CD8-positive, alpha-beta T cell (primary cell): ENCODE measurements at regions of chr19 and their contacts with region 1.

Region 1: GRCh38 chr19:1863726-1864480 is 524 bp upstream of the KLF16 start:
- DNase-seq: peak; percentile 80 to 96 (median 94)
- ATAC-seq: peak; percentile 71
- H3K4me3 ChIP-seq: peak overlapping the region; percentile 84 to 96
- H3K4me3 Mint-ChIP-seq: peak overlapping the region; percentile 80
- H3K27ac ChIP-seq: peak overlapping the region; percentile 71 to 83
- H3K27ac Mint-ChIP-seq: peak overlapping the region; percentile 57
- H3K4me1 ChIP-seq: peaks cover 42% of the 10 kb centered on the region
- H3K4me1 Mint-ChIP-seq: peaks cover 34% of the 10 kb centered on the region
- H3K27me3 ChIP-seq: no peaks in the 10 kb centered on the region
- H3K27me3 Mint-ChIP-seq: no peaks in the 10 kb centered on the region
- CTCF ChIP-seq: no peak

Region 2: GRCh38 chr19:1269065-1269477 is 594.8 kb before region 1 on chr19 and contains the start of gene CIRBP:
- CTCF ChIA-PET with region 1: no interaction called
- POLR2A ChIA-PET with region 1: no interaction called
- intact Hi-C with region 1: loop called in 1 of 2 experiments (anchors 5 kb)
- DNase-seq: peak; percentile 99 to 100 (median 99)
- ATAC-seq: peak; percentile 80
- H3K4me3 ChIP-seq: peak within 1 kb of the TSS; percentile 65 to 84
- H3K4me3 Mint-ChIP-seq: peak within 1 kb of the TSS; percentile 85
- H3K27ac ChIP-seq: peak within 1 kb of the TSS; percentile 88 to 89
- H3K27ac Mint-ChIP-seq: peak within 1 kb of the TSS; percentile 95
- H3K4me1 ChIP-seq: peaks cover 73% of the 10 kb centered on the region
- H3K4me1 Mint-ChIP-seq: peaks cover 68% of the 10 kb centered on the region
- H3K27me3 ChIP-seq: no peaks in the 10 kb centered on the region
- H3K27me3 Mint-ChIP-seq: no peaks in the 10 kb centered on the region
- CTCF ChIP-seq: no peak
- total RNA-seq, gene CIRBP: 689 to 695 TPM

Region 3: DNA sequence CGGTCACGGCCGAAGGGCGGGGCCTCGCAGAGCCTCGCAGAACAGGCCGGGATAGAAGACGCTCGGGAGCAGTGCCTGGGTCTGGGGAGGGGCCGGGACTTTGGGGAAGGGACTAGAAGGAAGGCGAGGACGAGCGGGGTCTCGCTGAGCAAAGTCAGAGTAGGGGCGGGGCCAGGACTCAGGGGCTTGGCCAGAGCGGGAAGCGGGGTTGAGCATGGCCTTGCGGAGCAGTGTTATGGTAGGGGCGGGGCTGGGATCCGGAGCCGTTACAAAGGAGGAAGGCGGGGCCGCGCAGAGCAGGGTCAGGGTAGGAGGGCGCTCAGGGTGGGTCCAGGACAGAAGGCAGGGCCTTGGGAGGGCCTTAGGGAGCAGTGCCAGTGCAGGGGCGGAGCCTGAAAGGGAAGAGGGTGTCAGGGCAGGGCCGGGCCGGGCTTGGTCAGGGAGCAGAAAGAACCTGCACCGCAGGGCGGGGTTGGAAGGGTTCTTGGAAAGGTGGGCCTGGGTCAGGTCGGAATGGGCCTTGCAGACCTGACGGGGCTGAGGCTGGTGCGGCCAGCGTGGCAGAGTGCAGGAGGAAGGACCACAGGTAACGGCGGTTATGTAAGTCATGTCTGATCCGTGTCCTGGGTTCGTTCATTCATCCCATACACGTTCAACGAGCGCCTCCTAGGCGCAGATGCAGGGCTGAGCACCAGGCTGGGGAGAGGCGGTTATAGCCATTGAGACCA is 51.3 kb before region 1 on chr19:
- CTCF ChIA-PET with region 1: no interaction called
- POLR2A ChIA-PET with region 1: no interaction called
- intact Hi-C with region 1: loop called in 1 of 2 experiments (anchors 1 kb)
- DNase-seq: peak; percentile 62 to 91 (median 81)
- ATAC-seq: peak; percentile 76
- H3K4me3 ChIP-seq: peak overlapping the region; percentile 72 to 77
- H3K4me3 Mint-ChIP-seq: peak overlapping the region; percentile 91
- H3K27ac ChIP-seq: peak overlapping the region; percentile 34 to 45
- H3K27ac Mint-ChIP-seq: peak overlapping the region; percentile 87
- H3K4me1 ChIP-seq: peaks cover 12% of the 10 kb centered on the region
- H3K4me1 Mint-ChIP-seq: peaks cover 13% of the 10 kb centered on the region
- H3K27me3 ChIP-seq: no peaks in the 10 kb centered on the region
- H3K27me3 Mint-ChIP-seq: no peaks in the 10 kb centered on the region
- CTCF ChIP-seq: peak; percentile 65

Region 4: DNA sequence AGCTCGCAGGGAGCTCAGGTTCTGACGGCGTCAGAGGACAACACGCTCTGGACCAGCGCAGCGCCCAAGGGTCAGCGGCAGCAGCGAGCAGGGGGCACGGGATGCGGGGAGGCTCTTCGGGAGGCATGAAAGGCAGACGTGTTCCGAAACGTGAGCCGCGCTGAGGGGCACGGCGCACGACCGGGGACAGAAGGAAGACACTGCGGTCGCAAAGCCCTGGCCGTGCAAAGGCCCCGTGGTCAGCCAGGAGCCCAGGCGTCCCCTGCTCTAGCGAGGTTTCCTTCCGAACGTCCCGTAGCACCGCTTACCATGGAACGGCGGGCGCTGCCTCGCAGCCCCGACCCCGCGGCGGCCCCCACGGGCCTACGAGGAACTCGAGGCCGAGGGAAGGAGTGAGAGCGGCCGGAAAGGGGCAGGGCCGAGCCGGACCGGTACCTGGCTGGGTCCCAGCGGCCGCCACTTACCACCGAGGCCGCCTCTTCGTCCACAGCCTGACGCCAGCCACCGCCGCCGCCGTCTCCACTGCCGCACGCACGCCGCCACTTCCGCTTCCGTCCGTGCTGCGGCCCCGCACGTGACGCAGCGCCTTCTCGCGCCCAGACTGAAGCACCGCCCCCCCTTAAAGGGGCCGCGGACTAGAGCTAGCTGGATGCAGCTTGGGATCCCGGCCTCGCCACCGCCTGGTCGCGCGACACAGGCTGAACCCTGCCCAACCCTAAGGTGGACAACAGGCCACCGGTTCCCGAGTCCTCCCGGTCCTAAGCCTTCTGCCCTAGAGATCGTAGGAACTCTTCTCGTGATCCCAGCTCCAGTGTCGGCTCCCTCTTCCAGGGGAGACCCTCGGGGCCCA is 12.0 kb after region 1 on chr19:
- CTCF ChIA-PET with region 1: interaction called, 10 read pairs
- POLR2A ChIA-PET with region 1: interaction called, 13 read pairs
- intact Hi-C with region 1: loop called (anchors 1 kb)
- DNase-seq: peak; percentile 70 to 93 (median 87)
- ATAC-seq: peak; percentile 84
- H3K4me3 ChIP-seq: peak overlapping the region; percentile 82 to 98
- H3K4me3 Mint-ChIP-seq: peak overlapping the region; percentile 99
- H3K27ac ChIP-seq: peak overlapping the region; percentile 90 to 95
- H3K27ac Mint-ChIP-seq: peak overlapping the region; percentile 98
- H3K4me1 ChIP-seq: peaks cover 43% of the 10 kb centered on the region
- H3K4me1 Mint-ChIP-seq: peaks cover 31% of the 10 kb centered on the region
- H3K27me3 ChIP-seq: no peaks in the 10 kb centered on the region
- H3K27me3 Mint-ChIP-seq: no peaks in the 10 kb centered on the region
- CTCF ChIP-seq: no peak

Region 5: DNA sequence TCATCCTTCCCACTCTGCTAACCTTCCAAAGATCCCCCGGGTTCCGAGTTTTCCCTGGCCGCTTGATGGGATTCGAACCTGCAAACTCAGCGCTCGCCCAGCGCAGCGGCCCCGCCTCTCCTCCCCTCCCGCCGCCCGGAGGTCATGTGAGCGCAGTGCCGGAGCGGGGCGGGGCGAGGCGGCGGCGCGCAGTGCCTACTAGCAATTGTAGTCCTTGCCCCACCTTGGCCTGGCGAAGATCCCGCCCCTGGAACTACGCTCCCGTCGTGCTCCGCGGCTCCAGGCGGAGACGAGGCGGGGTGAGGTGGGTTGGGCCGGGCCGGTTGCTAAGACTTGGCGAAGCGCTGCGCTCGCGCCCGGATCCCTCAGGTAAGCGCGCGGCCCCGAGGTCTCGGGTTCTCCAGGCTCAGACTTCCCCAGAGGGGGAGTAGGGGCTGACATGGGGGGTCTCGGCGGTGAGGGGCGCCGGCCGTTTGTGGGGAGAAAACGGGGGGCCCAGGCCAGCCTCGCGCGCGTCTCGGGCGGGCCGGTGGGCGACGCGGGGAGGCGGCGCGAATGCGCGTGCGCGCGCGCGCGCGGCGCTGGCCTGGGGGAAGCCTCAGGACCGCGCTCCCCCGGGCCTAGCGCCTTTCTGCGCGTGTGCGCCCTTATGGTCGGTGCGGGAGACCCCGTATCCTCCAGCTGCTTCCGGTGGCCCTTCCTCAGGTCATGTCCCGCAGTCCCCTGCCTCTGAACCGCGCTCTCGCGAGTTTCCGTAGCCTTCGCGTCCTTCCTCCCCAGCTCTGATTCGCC is 41.4 kb after region 1 on chr19 and contains the starts of genes ADAT3 and SCAMP4:
- CTCF ChIA-PET with region 1: interaction called, 3 read pairs
- POLR2A ChIA-PET with region 1: interaction called, 5 read pairs
- intact Hi-C with region 1: loop called (anchors 1 kb)
- DNase-seq: peak; percentile 97 to 99 (median 98)
- ATAC-seq: peak; percentile 99
- H3K4me3 ChIP-seq: peak within 1 kb of the TSS; percentile 61 to 67
- H3K4me3 Mint-ChIP-seq: peak within 1 kb of the TSS; percentile 89
- H3K27ac ChIP-seq: peak within 1 kb of the TSS; percentile 54 to 81
- H3K27ac Mint-ChIP-seq: peak within 1 kb of the TSS; percentile 85
- H3K4me1 ChIP-seq: peaks cover 38% of the 10 kb centered on the region
- H3K4me1 Mint-ChIP-seq: peaks cover 34% of the 10 kb centered on the region
- H3K27me3 ChIP-seq: no peaks in the 10 kb centered on the region
- H3K27me3 Mint-ChIP-seq: no peaks in the 10 kb centered on the region
- CTCF ChIP-seq: no peak
- total RNA-seq, gene ADAT3: 6.4 to 7.3 TPM
- total RNA-seq, gene SCAMP4: 18.5 to 19.2 TPM

Region 6: GRCh38 chr19:1917146-1917545 is 53.2 kb after region 1 on chr19:
- CTCF ChIA-PET with region 1: no interaction called
- POLR2A ChIA-PET with region 1: no interaction called
- intact Hi-C with region 1: no loop called
- DNase-seq: no peak
- ATAC-seq: no peak
- H3K4me3 ChIP-seq: no peak overlapping the region
- H3K4me3 Mint-ChIP-seq: no peak overlapping the region
- H3K27ac ChIP-seq: no peak overlapping the region
- H3K27ac Mint-ChIP-seq: no peak overlapping the region
- H3K4me1 ChIP-seq: peaks cover 3% of the 10 kb centered on the region
- H3K4me1 Mint-ChIP-seq: no peaks in the 10 kb centered on the region
- H3K27me3 ChIP-seq: no peaks in the 10 kb centered on the region
- H3K27me3 Mint-ChIP-seq: no peaks in the 10 kb centered on the region
- CTCF ChIP-seq: no peak

Region 7: DNA sequence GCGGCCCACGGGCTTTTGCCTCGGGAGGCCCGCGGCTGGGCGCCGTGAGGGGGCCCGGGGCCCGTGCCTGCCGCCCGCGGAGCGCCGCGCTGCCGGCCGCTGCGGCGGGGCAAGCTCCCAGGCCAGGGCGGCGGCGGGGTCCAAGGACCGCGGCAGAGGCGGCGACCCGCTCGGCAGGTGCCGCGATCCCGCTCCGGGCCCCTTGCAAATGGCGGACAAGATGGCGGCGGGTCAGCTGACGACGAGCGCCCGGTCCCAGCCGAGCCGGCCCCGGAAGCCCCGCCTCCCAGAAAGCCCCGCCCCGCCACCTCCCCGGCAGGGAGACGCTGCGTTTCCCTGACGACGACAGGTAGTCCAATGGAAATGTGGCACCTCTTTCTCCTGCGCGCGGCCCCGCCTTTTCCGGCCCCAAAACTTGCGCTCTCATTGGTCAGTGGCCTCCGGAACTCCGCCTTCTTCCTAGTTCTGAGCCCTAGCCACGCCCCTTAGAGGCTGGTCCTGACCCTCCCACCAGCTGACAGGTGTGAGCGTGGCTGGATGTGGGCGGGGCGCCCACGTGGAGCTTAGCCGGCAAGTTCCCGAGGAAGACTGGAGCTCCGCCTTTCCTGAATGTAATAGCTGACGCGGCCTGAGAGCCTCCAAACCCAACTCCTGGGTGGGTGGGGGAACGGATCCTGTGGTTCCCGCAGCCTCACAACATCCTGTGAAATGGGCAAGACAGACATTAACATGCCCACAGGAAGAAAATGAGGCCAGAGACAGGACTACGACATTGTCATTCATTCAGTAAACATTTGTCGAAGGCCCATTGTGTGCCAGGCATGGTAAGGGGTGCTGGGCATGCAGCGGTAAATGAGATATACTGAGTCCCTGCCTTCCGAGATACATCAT is 287.7 kb after region 1 on chr19 and contains the start of gene AP3D1:
- CTCF ChIA-PET with region 1: no interaction called
- POLR2A ChIA-PET with region 1: no interaction called
- intact Hi-C with region 1: loop called (anchors 1 kb)
- DNase-seq: peak; percentile 100
- ATAC-seq: peak; percentile 91
- H3K4me3 ChIP-seq: peak within 1 kb of the TSS; percentile 60 to 87
- H3K4me3 Mint-ChIP-seq: peak within 1 kb of the TSS; percentile 85
- H3K27ac ChIP-seq: peak within 1 kb of the TSS; percentile 78 to 79
- H3K27ac Mint-ChIP-seq: peak within 1 kb of the TSS; percentile 90
- H3K4me1 ChIP-seq: peaks cover 36% of the 10 kb centered on the region
- H3K4me1 Mint-ChIP-seq: peaks cover 35% of the 10 kb centered on the region
- H3K27me3 ChIP-seq: no peaks in the 10 kb centered on the region
- H3K27me3 Mint-ChIP-seq: no peaks in the 10 kb centered on the region
- CTCF ChIP-seq: no peak
- total RNA-seq, gene AP3D1: 39.4 to 42.5 TPM

Region 8: GRCh38 chr19:3505598-3506383 is 1641.9 kb after region 1 on chr19 and contains the start of gene FZR1:
- CTCF ChIA-PET with region 1: no interaction called
- POLR2A ChIA-PET with region 1: no interaction called
- intact Hi-C with region 1: loop called in 1 of 2 experiments (anchors 5 kb)
- DNase-seq: peak; percentile 99 to 100 (median 100)
- ATAC-seq: peak; percentile 85
- H3K4me3 ChIP-seq: peak within 1 kb of the TSS; percentile 76 to 83
- H3K4me3 Mint-ChIP-seq: peak within 1 kb of the TSS; percentile 85
- H3K27ac ChIP-seq: peak within 1 kb of the TSS; percentile 97
- H3K27ac Mint-ChIP-seq: peak within 1 kb of the TSS; percentile 97
- H3K4me1 ChIP-seq: peaks cover 36% of the 10 kb centered on the region
- H3K4me1 Mint-ChIP-seq: peaks cover 48% of the 10 kb centered on the region
- H3K27me3 ChIP-seq: no peaks in the 10 kb centered on the region
- H3K27me3 Mint-ChIP-seq: no peaks in the 10 kb centered on the region
- CTCF ChIP-seq: no peak
- total RNA-seq, gene FZR1: 130 to 142 TPM